IMR-90 (cell line): ENCODE measurements at regions of chr12 and their contacts with region 1.

Region 1: DNA sequence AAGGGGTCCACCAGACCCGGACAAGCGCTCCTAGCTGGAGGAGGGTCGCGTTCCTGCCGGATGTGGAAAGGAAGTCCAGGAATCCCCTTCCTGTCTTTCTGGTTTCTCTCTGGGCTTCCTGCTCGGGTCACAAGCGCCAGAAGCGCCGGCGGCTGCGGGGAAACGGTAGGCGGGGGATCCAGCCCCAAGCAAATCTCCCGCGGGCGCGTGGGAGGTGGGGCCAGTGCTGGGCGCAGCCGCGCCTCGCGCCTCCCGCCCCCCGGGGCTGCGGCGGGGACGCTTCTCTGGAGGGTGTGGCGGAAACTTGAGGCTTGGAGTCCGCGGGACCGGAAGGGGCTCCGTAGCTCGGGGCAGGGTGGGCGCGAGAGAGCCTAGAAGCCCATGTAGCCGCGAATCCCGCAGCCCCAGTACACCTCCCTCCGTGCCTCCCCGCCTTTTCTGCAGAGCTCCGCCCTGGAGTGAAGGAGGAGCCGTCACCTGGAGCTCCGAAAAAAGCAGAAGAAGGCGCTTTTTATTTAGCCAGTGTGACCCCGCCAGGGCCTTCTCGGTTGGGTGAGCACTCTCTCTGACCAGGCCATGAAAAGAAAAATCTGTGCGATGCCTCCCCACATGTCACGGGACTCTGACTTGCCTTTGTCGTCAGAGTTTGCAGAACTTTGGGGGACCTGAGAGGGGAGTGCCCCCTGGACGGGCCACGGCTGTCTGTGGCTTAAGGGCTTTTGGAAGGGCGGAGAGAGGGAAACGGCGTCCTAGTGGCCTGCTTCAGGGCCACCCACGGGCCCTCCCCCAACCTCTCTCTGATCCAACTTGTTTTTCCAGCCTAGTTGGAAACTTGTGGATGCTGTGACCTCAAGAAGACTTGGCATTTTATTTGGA is 21.4 kb upstream of the CLEC2D start:
- DNase-seq: peak; percentile 69
- ATAC-seq: peak; percentile 91
- H3K4me3 ChIP-seq: peak overlapping the region; percentile 60
- H3K27ac ChIP-seq: peak overlapping the region; percentile 81
- H3K4me1 ChIP-seq: peaks cover 5% of the 10 kb centered on the region
- H3K27me3 ChIP-seq: no peaks in the 10 kb centered on the region
- CTCF ChIP-seq: no peak
- POLR2A ChIP-seq: peak; percentile 28; the same call in 1 of the 2 replicates
- RAD21 ChIP-seq: no peak

Region 2: GRCh38 chr12:9673404-9674225 is 25.6 kb after region 1 on chr12:
- CTCF ChIA-PET with region 1: no interaction called
- POLR2A ChIA-PET with region 1: no interaction called
- dilution Hi-C with region 1: no loop called
- in situ Hi-C with region 1: no loop called
- intact Hi-C with region 1: loop called (anchors 1 kb)
- DNase-seq: peak; percentile 92
- ATAC-seq: peak; percentile 100
- H3K4me3 ChIP-seq: no peak overlapping the region
- H3K27ac ChIP-seq: no peak overlapping the region; the same call in 1 of the 2 replicates
- H3K4me1 ChIP-seq: peaks cover 10% of the 10 kb centered on the region
- H3K27me3 ChIP-seq: no peaks in the 10 kb centered on the region
- CTCF ChIP-seq: no peak
- POLR2A ChIP-seq: no peak
- RAD21 ChIP-seq: 0 out of 2 replicates have a peak, but pooled peaks have one; percentile 4

Region 3: GRCh38 chr12:9699898-9700605 is 52.0 kb after region 1 on chr12:
- CTCF ChIA-PET with region 1: no interaction called
- POLR2A ChIA-PET with region 1: no interaction called
- dilution Hi-C with region 1: no loop called
- in situ Hi-C with region 1: no loop called
- intact Hi-C with region 1: loop called (anchors 2 kb)
- DNase-seq: peak; percentile 60
- ATAC-seq: peak; percentile 91
- H3K4me3 ChIP-seq: no peak overlapping the region
- H3K27ac ChIP-seq: no peak overlapping the region
- H3K4me1 ChIP-seq: peaks cover 1% of the 10 kb centered on the region; the same call in 1 of the 2 replicates
- H3K27me3 ChIP-seq: no peaks in the 10 kb centered on the region
- CTCF ChIP-seq: no peak
- POLR2A ChIP-seq: no peak
- RAD21 ChIP-seq: no peak